ENCODE measurements at regions of chr22 and their contacts with region 1.

Region 1: DNA sequence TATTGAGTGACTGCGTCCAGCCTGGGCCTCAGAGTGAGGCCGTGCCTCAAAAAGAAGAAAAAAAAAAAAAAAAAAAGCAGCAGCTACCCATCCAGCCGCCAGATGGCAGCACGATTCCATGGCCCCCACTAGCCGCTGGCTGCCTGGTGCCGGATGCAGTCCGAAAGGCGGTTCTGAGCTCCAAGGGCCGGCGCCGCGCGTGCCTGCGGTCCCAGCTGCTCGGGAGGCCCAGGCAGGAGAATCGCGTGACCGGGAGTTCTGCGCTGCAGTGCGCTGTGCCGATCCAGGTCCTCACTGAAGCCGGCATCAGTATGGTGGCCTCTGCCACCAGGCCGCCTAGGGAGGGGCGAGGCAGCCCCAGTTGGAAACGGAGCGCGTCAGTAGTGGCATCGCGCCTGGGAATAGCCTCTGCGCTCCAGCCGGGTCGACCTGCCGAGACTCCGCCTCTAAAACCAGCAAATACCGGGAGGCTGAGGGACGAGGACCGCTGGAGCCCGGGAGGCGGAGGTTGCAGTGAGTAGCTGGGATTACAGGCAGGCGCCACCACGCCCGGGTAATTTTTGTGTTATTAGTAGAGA is 19.3 kb downstream of the SCARF2 start:
- DNase-seq: peak; percentile 63
- ATAC-seq: peak; percentile 88
- H3K4me3 ChIP-seq: peak overlapping the region; percentile 43 to 72
- H3K27ac ChIP-seq: peak overlapping the region; percentile 34; the same call in 1 of the 2 replicates
- H3K4me1 ChIP-seq: peaks cover 0 to 9% of the 10 kb centered on the region in 2 experiments; a peak in 1 of 4 replicates
- H3K27me3 ChIP-seq: no peaks in the 10 kb centered on the region
- CTCF ChIP-seq: peak; percentile 80 to 89 (median 85)
- POLR2A ChIP-seq: no peak
- RAD21 ChIP-seq: peak; percentile 95

Region 2: DNA sequence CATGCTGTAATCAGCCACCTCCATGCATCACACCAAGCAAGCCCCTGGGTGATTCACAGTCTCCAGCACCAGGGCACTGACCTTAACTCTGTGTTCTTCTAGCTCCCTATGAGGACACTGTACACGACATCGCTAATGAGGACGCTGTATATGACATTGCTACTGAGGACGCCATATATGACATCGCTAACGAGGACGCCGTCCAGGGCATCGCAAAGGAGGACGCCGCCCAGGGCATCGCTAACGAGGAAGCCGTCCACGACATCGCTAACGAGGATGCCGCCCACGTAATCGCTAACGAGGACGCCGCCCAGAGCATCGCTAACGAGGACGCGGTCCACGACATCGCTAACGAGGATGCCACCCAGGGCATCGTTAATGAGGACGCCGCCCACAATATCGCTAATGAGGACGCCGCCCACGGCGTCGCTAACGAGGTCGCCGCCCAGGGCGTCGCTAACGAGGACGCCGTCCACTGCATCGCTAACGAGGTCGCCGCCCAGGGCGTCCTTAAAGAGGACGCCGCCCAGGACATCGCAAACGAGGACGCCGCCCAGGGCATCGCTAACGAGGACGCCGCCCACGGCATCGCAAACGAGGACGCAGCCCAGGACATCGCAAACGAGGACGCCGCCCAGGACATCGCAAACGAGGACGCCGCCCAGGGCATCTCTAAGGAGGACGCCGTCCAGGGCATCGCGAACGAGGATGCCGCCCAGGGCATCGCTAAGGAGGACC is 63.9 kb before region 1 on chr22:
- CTCF ChIA-PET with region 1: no interaction called
- POLR2A ChIA-PET with region 1: no interaction called
- RAD21 ChIA-PET with region 1: no interaction called
- intact Hi-C with region 1: no loop called
- DNase-seq: no peak
- ATAC-seq: no peak
- H3K4me3 ChIP-seq: no peak overlapping the region
- H3K27ac ChIP-seq: no peak overlapping the region
- H3K4me1 ChIP-seq: no peaks in the 10 kb centered on the region
- H3K27me3 ChIP-seq: no peaks in the 10 kb centered on the region
- CTCF ChIP-seq: no peak
- POLR2A ChIP-seq: no peak
- RAD21 ChIP-seq: no peak

Region 3: GRCh38 chr22:20430720-20431510 is 12.6 kb after region 1 on chr22:
- CTCF ChIA-PET with region 1: interaction called, 19 read pairs
- POLR2A ChIA-PET with region 1: interaction called, 3 read pairs
- RAD21 ChIA-PET with region 1: interaction called in 1 of 2 experiments, 3 read pairs
- intact Hi-C with region 1: no loop called
- DNase-seq: peak; percentile 33
- ATAC-seq: peak; percentile 84
- H3K4me3 ChIP-seq: peak overlapping the region; percentile 33 to 52
- H3K27ac ChIP-seq: peak overlapping the region; percentile 3; the same call in 1 of the 2 replicates
- H3K4me1 ChIP-seq: peaks cover 16 to 35% of the 10 kb centered on the region in 2 experiments
- H3K27me3 ChIP-seq: no peaks in the 10 kb centered on the region
- CTCF ChIP-seq: peak; percentile 12 to 57 (median 44); a peak in 4 of 6 replicates
- POLR2A ChIP-seq: no peak
- RAD21 ChIP-seq: no peak

Region 4: GRCh38 chr22:20456064-20456721 is 37.9 kb after region 1 on chr22:
- CTCF ChIA-PET with region 1: interaction called, 62 read pairs
- POLR2A ChIA-PET with region 1: interaction called, 3 read pairs
- RAD21 ChIA-PET with region 1: interaction called, 10 to 11 read pairs
- intact Hi-C with region 1: loop called (anchors 1 kb)
- DNase-seq: peak; percentile 54
- ATAC-seq: peak; percentile 96
- H3K4me3 ChIP-seq: no peak overlapping the region
- H3K27ac ChIP-seq: no peak overlapping the region
- H3K4me1 ChIP-seq: peaks cover 0 to 3% of the 10 kb centered on the region in 2 experiments; a peak in 1 of 4 replicates
- H3K27me3 ChIP-seq: no peaks in the 10 kb centered on the region
- CTCF ChIP-seq: peak; percentile 78 to 92 (median 91)
- POLR2A ChIP-seq: no peak
- RAD21 ChIP-seq: peak; percentile 84

Region 5: GRCh38 chr22:20495861-20496681 is 77.8 kb after region 1 on chr22:
- CTCF ChIA-PET with region 1: interaction called, 4 read pairs
- POLR2A ChIA-PET with region 1: no interaction called
- RAD21 ChIA-PET with region 1: interaction called in 1 of 2 experiments, 7 read pairs
- intact Hi-C with region 1: loop called (anchors 5 kb)
- DNase-seq: peak; percentile 73
- ATAC-seq: peak; percentile 88
- H3K4me3 ChIP-seq: peak overlapping the region; percentile 47 to 81
- H3K27ac ChIP-seq: peak overlapping the region; percentile 94
- H3K4me1 ChIP-seq: peaks cover 10 to 33% of the 10 kb centered on the region in 2 experiments
- H3K27me3 ChIP-seq: no peaks in the 10 kb centered on the region
- CTCF ChIP-seq: peak; percentile 72 to 97 (median 91)
- POLR2A ChIP-seq: peak; percentile 82
- RAD21 ChIP-seq: peak; percentile 65

Region 6: GRCh38 chr22:20555276-20555675 is 137.0 kb after region 1 on chr22:
- CTCF ChIA-PET with region 1: no interaction called
- POLR2A ChIA-PET with region 1: no interaction called
- RAD21 ChIA-PET with region 1: no interaction called
- intact Hi-C with region 1: no loop called
- DNase-seq: no peak
- ATAC-seq: no peak
- H3K4me3 ChIP-seq: no peak overlapping the region
- H3K27ac ChIP-seq: no peak overlapping the region
- H3K4me1 ChIP-seq: no peaks in the 10 kb centered on the region
- H3K27me3 ChIP-seq: no peaks in the 10 kb centered on the region
- CTCF ChIP-seq: no peak
- POLR2A ChIP-seq: no peak
- RAD21 ChIP-seq: no peak

Region 7: GRCh38 chr22:20568989-20569769 is 150.9 kb after region 1 on chr22:
- CTCF ChIA-PET with region 1: interaction called, 17 read pairs
- POLR2A ChIA-PET with region 1: no interaction called
- RAD21 ChIA-PET with region 1: no interaction called
- intact Hi-C with region 1: loop called (anchors 2 kb)
- DNase-seq: peak; percentile 78
- ATAC-seq: peak; percentile 84
- H3K4me3 ChIP-seq: peak overlapping the region in 1 of 2 experiments; percentile 7; a peak in 1 of 4 replicates
- H3K27ac ChIP-seq: peak overlapping the region; percentile 76
- H3K4me1 ChIP-seq: peaks cover 41 to 55% of the 10 kb centered on the region in 2 experiments
- H3K27me3 ChIP-seq: no peaks in the 10 kb centered on the region
- CTCF ChIP-seq: no peak
- POLR2A ChIP-seq: no peak
- RAD21 ChIP-seq: no peak